ENCODE measurements at regions of chr12 and their contacts with region 1.

Region 1: DNA sequence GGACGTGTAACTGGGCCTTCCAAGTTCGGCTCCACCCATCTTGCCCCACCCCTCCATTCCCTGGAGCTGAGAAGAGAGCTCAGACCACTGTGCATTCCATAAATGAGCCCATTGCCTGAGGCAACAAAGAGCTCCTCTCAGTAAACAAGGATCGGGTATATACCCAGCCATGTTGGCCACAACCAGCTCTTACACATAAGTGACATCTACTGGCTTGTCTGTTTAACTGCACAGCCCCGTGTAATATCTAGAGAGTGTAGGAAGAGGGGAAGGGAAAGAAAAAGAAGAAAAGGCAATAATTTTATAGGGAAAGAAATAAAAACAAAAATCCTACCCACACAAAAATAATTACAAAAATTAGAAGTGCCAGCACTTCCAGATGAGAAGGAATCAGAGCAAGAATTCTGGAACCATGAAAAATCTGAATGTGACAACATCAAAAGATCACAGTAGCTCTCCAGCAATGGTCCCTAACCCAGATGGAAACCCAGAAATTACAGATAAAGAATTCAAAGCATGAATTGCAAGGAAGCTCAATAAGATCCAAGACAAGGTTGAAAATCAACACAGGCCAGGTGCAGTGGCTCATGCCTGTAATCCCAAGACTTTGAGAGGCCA is 308.1 kb downstream of the RPAP3 start:
- DNase-seq: peak; percentile 39 to 70 (median 62)
- H3K4me3 ChIP-seq: no peak overlapping the region
- H3K27ac ChIP-seq: no peak overlapping the region
- H3K4me1 ChIP-seq: peaks cover 4 to 20% (median 7%) of the 10 kb centered on the region in 4 experiments
- H3K27me3 ChIP-seq: no peaks in the 10 kb centered on the region

Region 2: DNA sequence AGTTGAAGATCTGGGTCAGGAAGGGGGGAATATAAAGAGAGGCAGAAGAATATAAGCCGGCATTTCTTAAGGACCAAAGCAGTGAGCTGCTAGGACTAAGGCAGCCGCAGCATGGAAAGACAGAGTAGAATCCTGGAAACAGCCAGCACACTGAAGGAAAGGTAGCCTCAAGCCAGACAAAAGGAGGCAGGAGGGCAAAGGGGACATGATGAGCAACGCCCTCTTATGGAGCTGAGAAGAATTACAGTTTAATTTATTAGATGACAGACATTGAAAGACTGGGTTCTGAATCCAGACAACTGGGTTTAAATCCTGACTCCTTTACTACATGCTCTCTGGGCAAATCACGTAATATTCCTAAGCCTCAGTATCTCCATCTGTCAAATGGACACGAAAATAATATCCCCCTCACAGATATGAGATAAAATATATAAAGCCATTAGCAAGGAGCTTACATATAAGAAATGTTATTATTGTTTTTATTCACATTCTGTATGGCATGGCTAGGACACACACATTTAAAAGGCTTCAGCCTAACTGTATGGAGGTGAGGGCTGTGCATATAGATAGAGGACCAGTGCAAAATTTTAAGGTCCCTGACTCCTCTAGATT is 326.4 kb before region 1 on chr12:
- CTCF ChIA-PET with region 1: interaction called, 10 read pairs
- POLR2A ChIA-PET with region 1: no interaction called
- DNase-seq: peak; percentile 20 to 50 (median 47)
- H3K4me3 ChIP-seq: no peak overlapping the region
- H3K27ac ChIP-seq: no peak overlapping the region
- H3K4me1 ChIP-seq: no peaks in the 10 kb centered on the region
- H3K27me3 ChIP-seq: peaks cover 0 to 1% (median 0%) of the 10 kb centered on the region in 5 experiments

Region 3: GRCh38 chr12:47207340-47207717 is 190.4 kb before region 1 on chr12:
- CTCF ChIA-PET with region 1: interaction called, 11 read pairs
- POLR2A ChIA-PET with region 1: no interaction called
- DNase-seq: peak; percentile 93 to 99 (median 98)
- H3K4me3 ChIP-seq: peak overlapping the region in 3 of 7 experiments; percentile 36 to 49 (median 48)
- H3K27ac ChIP-seq: peak overlapping the region; percentile 13 to 63
- H3K4me1 ChIP-seq: peaks cover 19 to 56% (median 39%) of the 10 kb centered on the region in 4 experiments
- H3K27me3 ChIP-seq: no peaks in the 10 kb centered on the region

Region 4: GRCh38 chr12:47473091-47473490 is 75.3 kb after region 1 on chr12:
- CTCF ChIA-PET with region 1: no interaction called
- POLR2A ChIA-PET with region 1: no interaction called
- DNase-seq: no peak
- H3K4me3 ChIP-seq: no peak overlapping the region
- H3K27ac ChIP-seq: no peak overlapping the region
- H3K4me1 ChIP-seq: no peaks in the 10 kb centered on the region
- H3K27me3 ChIP-seq: no peaks in the 10 kb centered on the region